Activated T-helper 1 cell treated with anti-CD3 and anti-CD28 coated beads, Interleukin-12 subunit alpha, Interleukin-12 subunit beta, Interleukin-2, Interleukin-4 antibody, amounts not matched to agents 30 ng/mL and 10 ng/mL and 1 ng/mL, durations not matched to agents 14 hours and 24 hours and 36 hours (primary cell): ENCODE measurements at regions of chr12 and their contacts with region 1.

Region 1: DNA sequence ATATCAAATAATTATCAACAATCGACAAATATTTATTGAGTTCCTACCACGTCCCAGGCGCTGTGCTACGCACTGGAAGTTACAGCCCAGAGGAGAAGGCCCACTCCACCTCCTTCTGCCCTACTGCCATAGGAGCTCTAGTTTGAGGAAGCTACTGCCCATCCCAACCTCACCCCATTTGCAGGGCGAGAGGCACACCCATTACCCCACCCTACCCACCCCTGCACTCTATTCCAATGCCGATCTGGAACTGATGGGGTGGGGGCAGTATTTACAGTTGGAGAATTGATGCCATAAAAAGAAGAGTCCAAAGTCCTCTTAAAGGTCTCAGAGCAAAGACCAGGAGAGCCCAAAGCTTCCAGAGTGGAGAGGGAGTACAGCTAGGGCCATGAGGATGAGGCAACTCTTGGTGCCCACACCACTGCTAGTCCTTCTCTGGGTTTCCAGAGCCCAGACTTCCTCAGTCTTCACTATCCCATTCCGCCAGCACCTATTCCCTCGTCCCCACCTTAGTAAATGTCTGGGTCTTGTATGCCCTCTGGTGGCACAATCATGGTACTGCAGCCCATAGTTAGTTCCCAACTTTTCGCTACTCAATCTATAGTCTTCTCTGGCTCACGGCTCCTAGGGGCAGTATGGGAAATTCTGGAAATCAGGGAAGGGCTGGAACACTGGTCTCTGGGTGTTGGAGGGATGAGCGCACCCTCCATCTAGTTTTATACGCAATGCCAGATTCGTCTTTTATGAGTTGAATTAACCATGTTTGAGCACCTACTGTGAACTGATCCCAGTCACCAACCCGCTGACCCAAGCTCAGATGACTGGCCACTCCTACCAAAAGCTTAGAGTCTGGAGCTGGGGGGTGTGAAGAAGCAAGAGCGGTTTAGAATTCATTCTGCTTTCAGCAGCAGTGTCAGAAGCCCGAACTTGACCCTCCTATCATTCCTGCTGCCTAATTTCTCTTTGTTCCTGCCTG is 6.9 kb upstream of the ADCY6 start:
- DNase-seq: peak; percentile 26
- H3K4me3 Mint-ChIP-seq: no peak overlapping the region
- H3K27ac Mint-ChIP-seq: no peak overlapping the region
- H3K4me1 Mint-ChIP-seq: peaks cover 5% of the 10 kb centered on the region
- H3K27me3 Mint-ChIP-seq: peaks cover 10% of the 10 kb centered on the region

Region 2: DNA sequence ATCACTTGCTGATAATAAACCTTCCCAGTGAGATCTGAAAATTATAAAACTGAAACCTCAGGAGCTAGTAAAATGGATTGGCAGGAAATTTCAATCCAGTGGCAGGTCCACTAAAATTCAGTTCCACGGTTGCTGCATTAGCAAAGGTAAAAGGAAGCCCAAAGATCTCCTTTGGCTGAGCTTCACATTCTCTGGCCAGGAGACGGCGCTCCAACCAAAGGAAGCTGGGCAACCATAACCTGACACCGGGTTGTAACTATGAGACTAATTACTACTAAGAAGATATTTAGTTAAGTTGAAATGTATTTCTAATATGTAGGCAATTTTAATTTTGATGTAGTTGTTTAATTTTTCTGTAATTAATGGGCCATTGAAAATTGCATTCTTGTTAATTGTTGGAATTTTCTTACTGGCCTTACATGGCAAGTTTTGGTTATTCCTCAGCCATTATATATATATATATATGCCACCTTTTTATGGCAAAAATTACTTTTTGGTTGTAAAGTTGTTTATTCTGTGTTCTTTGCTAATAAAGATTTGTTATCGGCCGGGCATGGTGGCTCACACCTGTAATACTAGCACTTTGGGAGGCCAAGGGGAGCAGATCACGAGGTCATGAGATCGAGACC is 253.4 kb before region 1 on chr12:
- intact Hi-C with region 1: loop called (anchors 1 kb)
- DNase-seq: no peak
- H3K4me3 Mint-ChIP-seq: no peak overlapping the region
- H3K27ac Mint-ChIP-seq: no peak overlapping the region
- H3K4me1 Mint-ChIP-seq: peaks cover 5% of the 10 kb centered on the region
- H3K27me3 Mint-ChIP-seq: no peaks in the 10 kb centered on the region

Region 3: DNA sequence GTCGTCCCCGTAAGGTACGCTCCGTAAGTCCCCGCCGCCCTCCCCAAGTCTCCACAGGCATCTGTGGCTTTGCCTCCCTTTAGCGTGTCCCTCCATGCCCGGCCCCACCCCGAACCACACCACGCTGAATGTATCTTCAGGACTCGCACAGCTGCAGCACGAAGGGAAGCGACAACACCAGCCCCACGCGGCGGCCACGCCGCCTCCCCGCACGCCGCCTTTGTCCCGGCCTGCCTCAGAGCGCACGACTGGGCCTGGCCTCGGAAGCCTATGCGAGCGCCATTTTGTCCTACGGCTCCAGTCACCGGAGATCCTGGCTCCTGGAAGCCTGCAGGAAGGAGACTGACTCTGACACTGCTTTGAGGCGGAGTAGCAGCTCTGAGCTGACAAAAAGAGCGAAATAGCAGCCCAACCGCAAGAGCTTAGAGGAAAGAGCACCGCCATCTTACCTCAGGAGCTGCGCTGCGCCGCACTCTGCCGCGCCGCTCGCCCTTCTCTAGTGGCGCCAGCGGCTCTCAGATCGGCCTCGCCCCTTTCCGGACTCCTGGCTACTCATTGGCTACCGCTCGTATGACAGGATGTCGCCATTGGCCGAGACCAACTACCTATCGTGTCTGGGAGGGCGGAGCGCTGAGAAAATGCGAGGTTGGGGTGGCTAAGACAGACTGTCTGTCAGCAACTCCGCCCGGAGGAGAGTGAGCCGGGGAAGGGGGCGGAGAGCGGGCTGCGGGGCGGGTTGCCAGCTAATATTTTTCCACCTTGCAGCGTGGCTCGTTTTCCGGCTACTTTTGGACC is 113.8 kb before region 1 on chr12 and contains the start of gene KANSL2:
- intact Hi-C with region 1: loop called (anchors 1 kb)
- DNase-seq: peak; percentile 97
- H3K4me3 Mint-ChIP-seq: peak within 1 kb of the TSS; percentile 99
- H3K27ac Mint-ChIP-seq: peak within 1 kb of the TSS; percentile 96
- H3K4me1 Mint-ChIP-seq: peaks cover 44% of the 10 kb centered on the region
- H3K27me3 Mint-ChIP-seq: no peaks in the 10 kb centered on the region
- total RNA-seq, gene KANSL2: 65.3 and 66.4 TPM in 2 replicates

Region 4: GRCh38 chr12:48758221-48758620 is 37.5 kb before region 1 on chr12:
- intact Hi-C with region 1: loop called (anchors 1 kb)
- DNase-seq: no peak
- H3K4me3 Mint-ChIP-seq: no peak overlapping the region
- H3K27ac Mint-ChIP-seq: no peak overlapping the region
- H3K4me1 Mint-ChIP-seq: no peaks in the 10 kb centered on the region
- H3K27me3 Mint-ChIP-seq: peaks cover 3% of the 10 kb centered on the region

Region 5: DNA sequence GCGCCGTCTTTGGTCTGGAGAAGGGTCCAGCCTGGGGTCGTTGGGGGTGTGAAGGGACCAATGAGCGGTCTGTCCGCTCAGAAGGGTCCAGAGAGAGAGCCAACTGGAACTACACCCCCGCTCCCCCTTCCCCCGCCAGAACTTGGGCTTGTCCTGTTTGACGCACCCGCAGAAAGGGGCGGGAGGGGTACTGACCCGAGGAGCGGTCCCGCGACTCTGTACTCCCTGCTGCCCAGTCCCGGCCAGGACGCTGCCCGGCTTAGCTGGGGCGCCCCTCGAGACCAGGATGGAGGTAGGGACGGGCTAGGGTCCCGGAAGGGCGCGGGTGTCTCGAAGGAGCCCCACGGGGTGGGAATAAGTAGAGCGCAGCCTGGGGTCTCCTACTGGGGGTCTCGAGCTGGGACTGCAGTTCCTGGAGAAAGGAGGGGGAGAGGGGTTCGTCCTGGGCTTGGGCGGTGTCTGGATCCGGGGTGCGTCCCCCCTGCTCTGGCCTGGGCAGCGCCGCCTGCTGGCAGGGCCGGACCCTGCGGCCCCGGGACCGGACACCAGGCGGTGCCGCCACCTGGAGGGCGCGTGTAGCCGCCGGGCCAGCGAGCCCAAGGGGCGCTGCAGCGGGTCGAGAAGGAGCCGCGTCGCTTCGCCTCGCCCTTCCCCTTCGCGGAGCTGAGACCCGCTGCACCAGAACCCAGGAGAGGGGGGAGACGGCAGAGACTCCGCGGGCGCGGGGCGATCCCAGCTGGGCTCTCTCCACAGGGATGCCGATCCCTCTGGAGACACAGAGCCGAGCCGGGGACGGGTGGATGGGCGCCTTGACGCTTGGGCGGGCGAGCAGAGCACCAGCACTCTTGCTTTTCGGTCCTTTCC is 18.7 kb after region 1 on chr12:
- intact Hi-C with region 1: loop called (anchors 1 kb)
- DNase-seq: peak; percentile 78
- H3K4me3 Mint-ChIP-seq: peak overlapping the region; percentile 93
- H3K27ac Mint-ChIP-seq: peak overlapping the region; percentile 55
- H3K4me1 Mint-ChIP-seq: peaks cover 28% of the 10 kb centered on the region
- H3K27me3 Mint-ChIP-seq: peaks cover 8% of the 10 kb centered on the region

Region 6: GRCh38 chr12:48882315-48882687 is 86.5 kb after region 1 on chr12:
- intact Hi-C with region 1: no loop called
- DNase-seq: no peak
- H3K4me3 Mint-ChIP-seq: no peak overlapping the region
- H3K27ac Mint-ChIP-seq: no peak overlapping the region
- H3K4me1 Mint-ChIP-seq: peaks cover 10% of the 10 kb centered on the region
- H3K27me3 Mint-ChIP-seq: peaks cover 45% of the 10 kb centered on the region

Region 7: DNA sequence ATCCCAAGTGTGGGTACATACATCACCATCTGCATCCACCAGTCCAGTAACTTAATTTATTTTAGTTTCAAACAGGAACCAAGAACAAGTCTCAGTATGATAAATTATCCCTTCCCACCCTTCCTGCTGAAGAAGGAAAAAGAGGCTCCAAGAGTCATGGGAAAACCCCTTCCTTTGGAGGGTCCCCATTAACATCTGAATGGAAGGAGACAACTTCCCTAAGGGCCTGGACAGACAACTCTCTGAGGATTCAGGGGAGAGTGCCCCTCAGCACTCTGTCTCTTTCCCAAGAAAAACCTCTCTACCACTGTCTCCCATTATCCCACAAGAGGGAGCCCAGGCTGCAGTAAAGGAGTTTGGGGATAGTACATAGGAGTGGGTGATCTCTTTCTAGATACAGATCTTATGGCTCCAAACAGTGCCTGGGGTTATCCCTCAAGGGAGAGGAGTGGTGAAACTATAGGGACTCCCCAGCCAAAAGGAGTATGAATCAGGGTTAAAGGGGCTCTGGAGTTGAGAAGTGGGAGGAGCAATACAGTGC is 169.6 kb after region 1 on chr12:
- intact Hi-C with region 1: no loop called
- DNase-seq: no peak
- H3K4me3 Mint-ChIP-seq: no peak overlapping the region
- H3K27ac Mint-ChIP-seq: no peak overlapping the region
- H3K4me1 Mint-ChIP-seq: peaks cover 9% of the 10 kb centered on the region
- H3K27me3 Mint-ChIP-seq: peaks cover 57% of the 10 kb centered on the region